Head of caudate nucleus (tissue), 42 donors: ENCODE measurements at regions of chr1 and their contacts with region 1.

Region 1: GRCh38 chr1:13667691-13668090 is 32.3 kb upstream of the PRDM2 start:
- DNase-seq: no peak

Region 2: DNA sequence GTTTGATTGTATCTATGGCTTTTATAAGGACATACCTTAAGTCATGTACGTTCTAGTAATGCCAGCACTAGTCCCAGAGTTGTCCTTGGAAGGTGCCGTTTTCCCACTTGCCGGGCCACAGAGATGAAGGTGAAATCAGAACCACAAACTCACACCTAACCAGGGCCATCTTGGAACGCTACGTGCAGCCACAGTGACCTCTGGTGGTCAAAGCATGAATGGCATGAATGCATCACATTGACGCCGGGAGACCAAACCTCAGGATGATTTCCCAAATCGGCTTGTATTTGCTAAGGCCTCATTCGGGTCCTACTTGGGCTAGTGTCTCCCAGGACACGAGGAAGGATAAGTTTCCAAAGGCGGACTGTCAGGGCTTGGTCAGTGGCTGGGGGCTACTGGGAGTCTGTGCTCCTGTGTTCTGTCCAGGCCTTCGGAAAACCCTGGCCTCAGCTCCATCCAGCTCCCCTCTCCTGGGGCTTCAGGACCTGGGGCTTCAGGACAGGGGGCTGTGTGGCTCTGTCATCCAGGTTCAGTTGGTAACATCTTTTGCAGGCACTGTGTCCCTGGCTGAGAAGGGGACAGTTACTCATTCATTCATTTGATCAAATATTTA is 292.8 kb after region 1 on chr1:
- intact Hi-C with region 1: loop called (anchors 2 kb)
- DNase-seq: peak; percentile 32 to 92 (median 78)